Lower leg skin (tissue), 4 donors: ENCODE measurements at regions of chr3 and their contacts with region 1.

Region 1: DNA sequence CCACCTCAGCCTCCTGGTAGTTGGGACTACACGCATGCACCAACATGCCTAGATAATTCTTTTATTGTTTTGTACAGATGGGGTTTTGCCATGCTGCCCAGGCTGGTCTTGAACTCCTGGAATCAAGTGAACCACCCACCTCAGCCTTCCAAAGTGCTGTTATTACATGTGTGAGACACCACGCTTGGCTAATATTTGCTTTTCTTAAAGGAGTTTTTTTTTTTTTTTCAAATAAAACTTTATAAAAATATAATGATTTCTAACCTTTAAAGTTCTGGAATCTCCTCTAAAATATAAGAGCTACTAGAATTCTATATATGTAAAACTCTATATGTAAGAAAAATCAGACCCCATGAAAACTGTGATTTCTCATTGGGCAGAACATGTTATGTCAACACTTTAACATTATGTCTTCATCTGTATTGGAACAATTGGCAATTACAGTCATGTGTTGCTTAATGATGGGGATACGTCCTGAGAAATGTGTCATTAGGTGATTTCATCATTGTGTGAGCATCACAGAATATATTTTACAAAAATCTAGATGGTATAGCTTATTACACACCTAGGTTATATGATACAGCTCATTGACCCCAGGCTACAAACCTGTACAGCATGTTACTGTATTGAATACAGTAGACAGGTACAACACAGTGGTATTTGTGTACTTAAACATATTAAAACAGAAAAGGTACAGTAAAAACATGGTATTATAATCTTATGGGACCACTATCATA is 377.0 kb downstream of the PLCL2 start:
- DNase-seq: no peak
- H3K4me3 ChIP-seq: no peak overlapping the region
- CTCF ChIP-seq: no peak
- POLR2A ChIP-seq: no peak

Region 2: DNA sequence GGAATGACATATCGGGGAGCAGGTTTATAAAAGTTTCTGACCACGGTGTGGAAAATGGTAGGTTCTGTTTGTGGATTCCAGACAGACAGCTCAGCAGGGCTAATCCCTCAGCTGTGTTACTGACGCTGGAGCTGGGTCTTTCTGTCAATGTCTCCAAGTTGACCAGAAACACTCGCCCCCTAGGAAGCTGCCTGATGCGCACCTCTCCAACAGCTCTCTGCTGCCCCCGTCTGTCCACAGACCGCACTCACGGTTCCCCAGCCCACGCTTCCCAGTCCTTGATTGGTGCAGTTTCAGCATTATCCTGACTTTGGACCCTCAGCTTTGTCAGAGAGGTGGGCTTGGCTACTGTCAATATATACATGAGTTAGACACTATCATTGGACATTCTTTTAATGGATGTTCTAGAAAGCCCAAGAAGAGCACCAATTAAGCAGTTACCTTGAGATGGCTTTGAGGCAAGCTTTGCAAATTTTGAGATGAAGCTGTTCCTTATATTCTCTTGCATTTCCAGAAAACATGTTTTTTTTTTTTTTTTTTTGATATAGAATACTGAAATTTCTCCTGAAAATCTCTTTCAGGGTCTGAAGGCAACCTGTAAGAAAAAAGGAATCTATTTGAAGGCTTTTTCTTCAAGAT is 579.5 kb after region 1 on chr3:
- intact Hi-C with region 1: loop called (anchors 5 kb)
- DNase-seq: peak; percentile 59 to 94
- H3K4me3 ChIP-seq: no peak overlapping the region
- CTCF ChIP-seq: peak in 1 of 3 donors; percentile 58
- POLR2A ChIP-seq: no peak